H1 (cell line): ENCODE measurements at regions of chr2 and their contacts with region 1.

Region 1: DNA sequence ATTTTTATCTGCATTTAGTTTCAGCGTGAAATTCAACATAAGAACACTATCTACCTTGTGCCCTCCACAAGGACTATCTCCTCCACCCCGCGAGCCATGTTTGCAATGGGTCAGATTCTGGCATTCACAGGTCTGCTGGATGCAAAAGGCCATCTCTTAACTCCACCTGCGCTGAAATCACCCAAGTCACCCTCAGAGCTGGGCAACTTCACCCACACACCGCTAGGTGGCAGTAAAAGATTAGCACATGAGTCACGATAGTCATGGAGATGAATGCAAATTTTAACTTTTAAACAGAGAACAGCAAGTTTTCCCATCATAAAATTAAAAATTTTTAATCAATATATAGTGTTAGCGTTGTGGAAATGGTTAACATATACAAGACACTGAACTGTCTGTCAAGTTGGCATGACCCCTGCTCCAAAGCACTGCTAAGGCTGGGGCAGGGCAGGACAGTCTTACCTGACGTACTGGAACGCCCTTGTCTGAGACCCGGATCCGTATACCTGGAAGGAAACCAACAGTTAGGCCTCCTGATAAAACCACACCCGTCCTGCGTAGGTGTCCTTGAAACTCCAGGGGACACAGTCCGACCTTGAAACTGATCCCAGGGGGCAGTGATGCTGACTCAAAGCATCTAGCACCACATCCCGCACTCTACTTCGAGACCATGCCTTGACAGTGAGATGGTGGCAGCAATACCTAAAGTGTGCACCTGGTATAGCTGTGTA is 89.6 kb downstream of the UXS1 start:
- DNase-seq: peak; percentile 36 to 67
- H3K4me3 ChIP-seq: no peak overlapping the region
- H3K27ac ChIP-seq: no peak overlapping the region
- H3K4me1 ChIP-seq: no peaks in the 10 kb centered on the region
- H3K27me3 ChIP-seq: no peaks in the 10 kb centered on the region
- CTCF ChIP-seq: peak; percentile 81 to 89 (median 85)
- EP300 ChIP-seq: no peak
- POLR2A ChIP-seq: no peak
- RAD21 ChIP-seq: peak; percentile 96 to 97

Region 2: GRCh38 chr2:106078096-106078495 is 26.4 kb before region 1 on chr2:
- CTCF ChIA-PET with region 1: no interaction called
- POLR2A ChIA-PET with region 1: no interaction called
- DNase-seq: no peak
- H3K4me3 ChIP-seq: no peak overlapping the region
- H3K27ac ChIP-seq: no peak overlapping the region
- H3K4me1 ChIP-seq: peaks cover 0 to 4% (median under 1%) of the 10 kb centered on the region in 4 experiments; a peak in 3 of 7 replicates
- H3K27me3 ChIP-seq: no peaks in the 10 kb centered on the region
- CTCF ChIP-seq: no peak
- EP300 ChIP-seq: no peak
- POLR2A ChIP-seq: no peak
- RAD21 ChIP-seq: no peak

Region 3: DNA sequence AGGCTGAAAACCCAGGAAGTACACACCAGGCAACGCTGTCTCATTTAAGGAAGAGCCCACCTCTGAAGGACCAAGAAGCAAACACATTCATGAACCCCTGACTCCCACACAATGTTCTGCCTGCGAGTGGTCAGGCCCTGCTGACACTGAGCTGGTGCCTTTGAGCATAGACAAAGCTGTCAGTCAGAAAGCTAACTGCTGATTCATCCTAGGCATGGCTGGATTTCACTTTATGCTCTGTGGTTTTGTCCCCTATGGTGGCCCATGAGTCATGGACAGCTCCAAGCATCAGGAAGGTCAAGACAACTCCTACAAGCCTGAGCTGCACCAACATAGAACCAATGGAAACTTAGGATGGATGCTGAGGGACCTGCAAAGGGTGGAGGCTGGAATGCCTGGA is 10.8 kb after region 1 on chr2:
- CTCF ChIA-PET with region 1: interaction called, 11 read pairs
- POLR2A ChIA-PET with region 1: no interaction called
- DNase-seq: no peak
- H3K4me3 ChIP-seq: no peak overlapping the region
- H3K27ac ChIP-seq: 0 out of 2 replicates have a peak overlapping the region, but pooled peaks have one; percentile 38
- H3K4me1 ChIP-seq: peaks cover 3 to 13% (median 9%) of the 10 kb centered on the region in 4 experiments
- H3K27me3 ChIP-seq: no peaks in the 10 kb centered on the region
- CTCF ChIP-seq: no peak
- EP300 ChIP-seq: no peak
- POLR2A ChIP-seq: no peak
- RAD21 ChIP-seq: no peak

Region 4: DNA sequence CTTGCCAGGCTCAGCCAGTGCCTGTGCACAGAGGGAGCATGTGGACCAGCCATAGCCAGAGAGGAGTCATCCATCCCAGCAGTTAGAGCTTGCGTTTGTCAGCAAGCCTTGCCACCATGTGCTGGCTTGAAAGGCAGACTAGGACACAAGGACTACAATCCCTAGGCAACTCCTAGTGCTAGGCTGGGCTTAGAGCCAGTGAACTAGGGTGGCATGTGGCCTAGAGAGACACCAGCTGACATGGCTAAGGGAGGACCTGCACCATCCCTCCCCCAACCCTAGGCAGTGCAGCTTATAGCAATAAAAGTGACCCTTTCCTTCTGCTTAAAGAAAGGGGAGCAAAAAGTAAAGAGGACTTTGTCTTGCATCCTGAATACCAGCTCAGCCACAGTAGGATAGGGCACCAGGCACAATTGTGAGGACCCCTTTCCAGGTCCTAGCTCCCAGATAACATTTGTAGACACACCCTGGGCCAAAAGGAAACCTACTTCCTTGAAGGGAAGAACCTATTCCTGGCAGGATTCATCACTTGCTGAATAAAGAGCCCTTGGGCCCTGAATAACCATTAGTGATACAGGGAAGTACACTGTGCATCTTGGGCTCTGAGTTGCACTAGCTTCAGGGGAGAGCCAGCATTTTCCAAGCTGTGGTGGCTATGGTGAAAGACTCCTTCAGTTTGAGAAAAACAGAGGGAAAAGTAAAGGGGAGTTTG is 128.3 kb after region 1 on chr2:
- CTCF ChIA-PET with region 1: no interaction called
- POLR2A ChIA-PET with region 1: no interaction called
- DNase-seq: no peak
- H3K4me3 ChIP-seq: no peak overlapping the region
- H3K27ac ChIP-seq: no peak overlapping the region
- H3K4me1 ChIP-seq: no peaks in the 10 kb centered on the region
- H3K27me3 ChIP-seq: no peaks in the 10 kb centered on the region
- CTCF ChIP-seq: no peak
- EP300 ChIP-seq: no peak
- POLR2A ChIP-seq: no peak
- RAD21 ChIP-seq: no peak